ENCODE measurements at regions of chr20 and their contacts with region 1.

Region 1: DNA sequence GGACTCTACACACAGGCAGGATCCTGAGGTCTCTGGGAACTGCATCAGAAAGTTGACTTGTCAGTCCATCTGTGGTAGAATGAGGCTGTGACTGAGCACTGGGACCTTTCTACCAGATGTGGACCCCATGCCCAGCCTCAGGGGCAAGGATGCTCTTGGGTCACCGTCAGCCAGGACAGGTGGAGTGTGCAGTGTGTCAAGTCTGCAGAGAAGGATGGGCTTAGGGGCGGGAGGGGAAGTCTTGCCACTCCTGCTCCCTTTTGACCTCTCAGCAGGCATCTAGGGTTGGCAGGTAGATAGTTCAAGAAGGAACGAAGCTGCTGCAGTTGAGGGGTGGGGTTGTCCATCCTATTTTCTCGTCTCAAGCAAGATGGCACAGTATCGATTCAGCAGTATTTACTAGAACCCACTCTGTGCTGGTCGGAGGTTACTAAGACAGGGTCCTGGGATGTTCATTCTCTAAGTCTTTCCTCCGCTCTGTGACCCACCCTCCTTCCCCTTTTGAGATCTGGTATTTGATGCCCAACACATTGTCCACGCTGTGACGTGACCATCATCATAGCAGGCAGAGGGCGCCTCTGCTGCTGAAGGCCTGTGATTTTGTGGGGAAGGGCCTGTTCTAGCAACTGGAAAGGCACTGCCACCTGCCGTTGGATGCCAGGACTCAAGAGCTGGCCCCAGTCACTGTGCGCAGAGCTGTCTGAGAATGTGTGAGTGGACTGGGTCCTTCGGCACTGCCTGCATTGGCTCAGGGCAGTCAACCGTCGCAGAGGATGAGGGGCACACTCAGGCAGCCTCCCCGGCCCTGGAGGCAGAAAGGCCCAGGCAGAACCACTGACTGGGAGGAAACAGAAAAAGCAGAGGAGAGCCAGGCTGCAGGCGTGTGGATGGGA is 23.2 kb downstream of the RBCK1 start:
- DNase-seq: peak; percentile 79 to 88 (median 87)
- H3K4me3 ChIP-seq: no peak overlapping the region
- H3K27ac ChIP-seq: no peak overlapping the region
- H3K4me1 ChIP-seq: peaks cover 0 to 5% (median 2%) of the 10 kb centered on the region in 4 experiments
- H3K27me3 ChIP-seq: no peaks in the 10 kb centered on the region

Region 2: DNA sequence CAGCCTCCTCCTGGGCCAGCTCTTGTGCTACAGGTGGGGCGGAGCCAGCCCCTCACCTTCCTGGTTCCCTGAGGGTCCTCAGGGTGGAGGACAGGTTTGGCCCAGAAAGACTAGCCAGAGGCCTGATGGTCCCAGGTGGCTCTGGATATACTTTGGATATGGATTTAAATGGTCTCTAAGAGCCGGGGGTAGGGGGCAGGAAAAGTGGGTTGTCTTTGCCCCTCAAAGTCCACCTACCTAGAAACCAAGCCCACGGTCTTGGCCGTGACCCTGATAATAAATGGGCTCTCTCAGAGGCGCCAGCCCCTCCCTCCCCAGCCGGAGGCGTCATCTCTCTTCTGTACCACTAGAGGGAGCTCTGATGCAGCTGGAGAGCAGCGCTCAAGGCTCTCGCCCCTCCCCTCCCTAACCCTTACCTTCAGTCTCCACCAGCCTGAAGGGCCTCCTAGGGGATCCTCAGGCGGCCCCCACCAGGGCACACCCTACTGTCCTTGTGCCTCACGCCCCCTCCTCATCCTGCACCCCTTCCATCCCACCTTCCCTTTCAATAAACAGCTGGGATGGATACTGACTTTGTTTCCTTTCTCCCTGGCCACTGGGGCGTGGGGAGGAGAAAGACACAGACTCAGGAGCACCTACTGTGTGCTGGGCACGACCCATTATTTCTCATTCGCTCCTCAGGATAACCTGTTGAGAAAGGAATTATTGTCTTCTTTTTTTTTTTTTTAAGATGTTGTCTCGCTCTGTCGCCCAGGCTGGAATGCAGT is 76.8 kb before region 1 on chr20:
- CTCF ChIA-PET with region 1: interaction called, 53 read pairs
- POLR2A ChIA-PET with region 1: no interaction called
- DNase-seq: peak; percentile 83 to 92 (median 88)
- H3K4me3 ChIP-seq: no peak overlapping the region
- H3K27ac ChIP-seq: no peak overlapping the region
- H3K4me1 ChIP-seq: peaks cover 0 to 2% (median 0%) of the 10 kb centered on the region in 4 experiments
- H3K27me3 ChIP-seq: no peaks in the 10 kb centered on the region

Region 3: DNA sequence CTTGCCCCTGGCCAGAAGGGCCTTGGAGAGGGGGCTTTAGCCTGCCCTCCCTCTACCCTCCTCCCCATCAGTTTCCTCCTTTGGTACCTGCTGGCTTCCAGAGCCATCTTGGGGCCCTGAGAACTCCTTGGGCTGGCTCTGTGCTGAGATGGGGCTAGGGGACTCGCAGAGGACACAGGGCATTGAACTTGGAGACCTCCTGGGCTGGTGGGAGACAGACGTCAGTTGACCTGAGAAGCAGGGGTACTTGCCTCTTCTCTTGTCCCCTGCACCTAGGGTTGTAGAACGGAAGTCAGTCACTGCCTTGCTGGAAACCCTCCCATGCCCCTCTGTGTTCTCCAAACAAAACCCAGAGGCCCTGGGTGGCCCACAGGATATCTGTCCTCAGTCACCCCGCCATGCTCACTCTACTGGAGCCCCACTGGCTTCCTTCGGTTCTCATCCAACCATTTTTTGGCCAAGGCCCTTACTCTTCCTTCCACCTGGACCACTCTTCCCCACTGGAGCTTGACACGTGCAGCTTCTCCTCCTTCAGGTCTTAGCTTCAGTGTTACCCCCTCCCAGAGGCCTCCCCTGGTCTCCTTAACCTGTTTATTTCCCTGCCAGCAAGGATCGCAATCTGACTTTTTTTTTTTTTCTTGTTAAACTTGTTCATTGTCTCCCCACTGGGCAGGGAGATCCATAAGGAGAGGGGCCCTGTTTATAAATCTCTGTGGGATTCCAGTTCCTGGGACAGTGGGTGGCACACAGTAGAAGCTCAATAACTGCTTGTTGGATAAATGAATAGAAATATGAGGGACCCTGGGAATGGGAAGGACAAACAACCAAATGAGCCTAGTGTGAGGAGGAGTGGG is 22.2 kb before region 1 on chr20:
- CTCF ChIA-PET with region 1: interaction called, 17 read pairs
- POLR2A ChIA-PET with region 1: no interaction called
- DNase-seq: peak; percentile 2 to 29 (median 17)
- H3K4me3 ChIP-seq: peak overlapping the region; percentile 63 to 99 (median 96)
- H3K27ac ChIP-seq: peak overlapping the region; percentile 74 to 92
- H3K4me1 ChIP-seq: peaks cover 6 to 27% (median 23%) of the 10 kb centered on the region in 4 experiments
- H3K27me3 ChIP-seq: no peaks in the 10 kb centered on the region

Region 4: DNA sequence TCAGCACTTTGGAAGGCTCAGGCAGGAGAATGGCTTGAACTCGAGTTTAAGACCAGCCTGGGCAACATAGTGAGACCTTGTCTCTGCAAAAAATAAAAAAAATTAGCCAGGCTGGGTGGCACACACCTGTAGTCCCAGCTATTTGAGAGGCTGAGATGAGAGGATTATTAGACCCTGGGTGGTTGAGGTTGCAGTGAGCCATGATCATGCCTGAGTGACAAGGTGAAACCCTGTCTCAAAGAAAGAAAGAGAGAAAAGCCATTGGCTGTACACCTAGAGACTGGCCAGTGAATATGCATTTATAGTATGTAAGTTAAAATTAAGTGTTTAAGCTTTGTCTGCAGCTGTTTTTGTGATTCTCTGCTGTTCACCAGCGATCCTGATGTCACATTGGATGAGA is 17.1 kb before region 1 on chr20:
- CTCF ChIA-PET with region 1: interaction called, 17 read pairs
- POLR2A ChIA-PET with region 1: no interaction called
- DNase-seq: no peak
- H3K4me3 ChIP-seq: no peak overlapping the region
- H3K27ac ChIP-seq: no peak overlapping the region
- H3K4me1 ChIP-seq: peaks cover 6 to 11% (median 9%) of the 10 kb centered on the region in 4 experiments
- H3K27me3 ChIP-seq: no peaks in the 10 kb centered on the region

Region 5: DNA sequence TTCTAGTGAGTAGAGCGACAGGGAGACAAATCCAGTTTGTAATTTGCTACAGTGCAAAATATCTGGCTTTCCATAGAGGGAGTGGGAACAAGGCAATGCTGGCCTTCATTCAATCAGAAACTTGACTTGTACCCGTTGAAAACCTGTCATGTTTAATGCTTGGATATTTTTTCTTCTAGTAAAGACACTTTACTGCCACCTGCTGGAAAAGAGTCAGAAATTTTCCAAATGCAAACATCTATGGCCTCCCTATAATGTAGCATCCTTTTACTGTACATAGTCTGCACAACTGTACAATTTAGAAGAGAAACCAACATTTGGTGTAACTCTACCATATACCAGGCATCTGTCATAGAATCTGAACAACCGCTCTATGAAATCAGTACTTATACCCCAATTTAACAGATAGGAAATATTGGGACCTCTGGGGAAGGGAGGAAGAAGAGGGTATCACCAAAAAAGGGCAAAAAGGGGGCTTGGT is 47.7 kb after region 1 on chr20:
- CTCF ChIA-PET with region 1: interaction called, 12 read pairs
- POLR2A ChIA-PET with region 1: interaction called, 3 read pairs
- DNase-seq: peak; percentile 72 to 89 (median 82)
- H3K4me3 ChIP-seq: no peak overlapping the region
- H3K27ac ChIP-seq: no peak overlapping the region
- H3K4me1 ChIP-seq: no peaks in the 10 kb centered on the region
- H3K27me3 ChIP-seq: no peaks in the 10 kb centered on the region

Region 6: GRCh38 chr20:517221-517620 is 86.0 kb after region 1 on chr20:
- CTCF ChIA-PET with region 1: no interaction called
- POLR2A ChIA-PET with region 1: no interaction called
- DNase-seq: no peak
- H3K4me3 ChIP-seq: no peak overlapping the region
- H3K27ac ChIP-seq: no peak overlapping the region
- H3K4me1 ChIP-seq: peaks cover 0 to 3% (median 0%) of the 10 kb centered on the region in 4 experiments
- H3K27me3 ChIP-seq: no peaks in the 10 kb centered on the region